ENCODE measurements at regions of chr11 and their contacts with region 1.

Region 1: GRCh38 chr11:128066399-128066798 is 521.0 kb downstream of the ETS1 start:
- DNase-seq: no peak
- ATAC-seq: no peak
- H3K4me3 ChIP-seq: no peak overlapping the region
- H3K4me3 Mint-ChIP-seq: no peak overlapping the region
- H3K27ac ChIP-seq: no peak overlapping the region
- H3K27ac Mint-ChIP-seq: no peak overlapping the region
- H3K4me1 ChIP-seq: peaks cover 0 to under 1% of the 10 kb centered on the region in 2 donors
- H3K4me1 Mint-ChIP-seq: peaks cover 0 to 9% (median 0%) of the 10 kb centered on the region in 7 donors
- H3K27me3 ChIP-seq: no peaks in the 10 kb centered on the region
- H3K27me3 Mint-ChIP-seq: peaks cover 0 to 12% (median 0%) of the 10 kb centered on the region in 5 donors

Region 2: DNA sequence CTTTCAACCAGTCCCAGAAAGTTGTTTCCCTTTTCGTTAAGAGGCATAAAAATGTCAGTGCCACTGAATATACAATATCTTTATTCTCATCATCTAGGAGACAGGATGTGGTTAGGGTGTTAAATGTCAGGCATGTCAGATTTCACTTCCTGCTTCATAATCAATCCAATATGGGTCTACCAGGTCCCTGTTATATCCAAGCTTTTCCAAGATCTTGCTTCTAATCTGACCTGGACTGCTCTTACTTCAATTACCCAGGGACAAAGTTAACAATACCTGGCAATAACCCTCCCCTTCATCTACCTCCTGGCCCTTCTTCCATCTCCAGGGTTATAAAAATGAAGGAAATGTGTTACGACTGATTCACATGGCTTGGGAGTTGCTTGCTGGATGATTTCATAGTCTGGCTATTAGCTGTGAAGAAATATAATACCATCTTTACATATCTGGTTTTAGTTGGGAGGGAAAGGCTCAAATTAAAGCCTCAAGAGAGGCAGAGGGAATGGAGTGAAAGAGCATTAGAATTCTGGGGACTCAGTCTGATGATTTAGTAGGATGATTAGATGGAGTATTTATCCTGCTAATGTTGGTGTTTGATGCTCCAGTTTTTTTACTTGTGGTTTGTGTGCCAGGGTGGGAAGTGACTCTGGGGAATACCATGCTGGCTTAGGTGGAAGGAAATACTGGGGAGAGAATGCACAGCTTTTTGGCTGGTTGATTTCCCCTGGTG is 13.3 kb before region 1 on chr11:
- CTCF ChIA-PET with region 1: interaction called, 3 read pairs
- POLR2A ChIA-PET with region 1: interaction called, 6 read pairs
- intact Hi-C with region 1: loop called in 1 of 2 experiments (anchors 1 kb)
- DNase-seq: peak in 7 of 9 donors; percentile 21 to 66 (median 61)
- ATAC-seq: peak; percentile 60
- H3K4me3 ChIP-seq: peak overlapping the region; percentile 28
- H3K4me3 Mint-ChIP-seq: peak overlapping the region; percentile 54 to 90 (median 80)
- H3K27ac ChIP-seq: peak overlapping the region; percentile 68
- H3K27ac Mint-ChIP-seq: peak overlapping the region; percentile 82 to 95 (median 90)
- H3K4me1 ChIP-seq: peaks cover 63 to 64% of the 10 kb centered on the region in 2 donors
- H3K4me1 Mint-ChIP-seq: peaks cover 40 to 81% (median 78%) of the 10 kb centered on the region in 7 donors
- H3K27me3 ChIP-seq: no peaks in the 10 kb centered on the region
- H3K27me3 Mint-ChIP-seq: no peaks in the 10 kb centered on the region

Measured in naive thymus-derived CD4-positive, alpha-beta T cell (primary cell).